H1 (cell line): ENCODE measurements at regions of chr5 and their contacts with region 1.

Region 1: GRCh38 chr5:57338068-57338892 is 144.3 kb downstream of the ACTBL2 start:
- DNase-seq: no peak
- H3K4me3 ChIP-seq: no peak overlapping the region
- H3K27ac ChIP-seq: no peak overlapping the region
- H3K4me1 ChIP-seq: no peaks in the 10 kb centered on the region
- H3K27me3 ChIP-seq: peaks cover 0 to 1% (median 0%) of the 10 kb centered on the region in 4 experiments; a peak in 1 of 7 replicates
- CTCF ChIP-seq: peak; percentile 53 to 86 (median 75)
- EP300 ChIP-seq: no peak
- POLR2A ChIP-seq: no peak
- RAD21 ChIP-seq: peak; percentile 67 to 76

Region 2: DNA sequence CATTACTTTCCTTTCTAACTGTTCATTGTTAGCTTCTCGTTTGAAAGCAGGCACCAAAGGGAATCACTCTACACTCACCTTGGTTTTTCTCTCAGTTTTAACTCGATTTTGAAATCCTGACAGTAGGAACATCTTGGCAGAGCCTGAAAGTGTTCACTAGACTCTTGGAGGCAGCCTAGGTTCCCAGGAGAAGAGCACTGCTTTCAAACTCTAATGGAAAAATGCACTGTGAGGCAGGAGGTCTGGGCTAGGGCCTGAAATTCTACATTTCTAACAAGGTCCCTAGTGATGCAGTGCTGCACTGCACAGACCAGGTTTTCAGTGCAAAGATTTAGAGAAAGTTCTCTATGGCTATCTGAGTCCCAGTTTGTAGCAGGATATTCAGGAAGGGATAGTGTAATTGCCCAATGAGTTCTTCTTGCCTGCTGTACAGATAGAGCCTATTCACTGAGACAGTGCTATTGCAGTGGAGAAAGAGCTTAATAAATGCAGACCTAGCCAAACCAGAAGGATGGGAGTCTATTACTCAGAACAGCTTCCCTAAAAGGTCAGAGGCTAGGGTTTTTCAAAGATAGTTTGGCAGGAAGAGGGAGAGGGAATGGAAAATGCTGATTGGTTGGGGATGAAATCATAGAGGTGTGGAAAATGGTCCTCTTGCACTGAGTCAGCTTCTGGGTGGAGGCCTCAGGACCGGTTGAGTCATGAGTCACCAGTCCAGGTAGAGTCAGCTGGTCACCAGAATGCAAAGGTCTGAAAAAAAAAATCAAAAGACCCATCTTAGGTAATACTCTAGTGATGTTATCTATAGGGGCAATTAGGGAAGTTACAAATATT is 10.5 kb before region 1 on chr5:
- CTCF ChIA-PET with region 1: interaction called, 69 read pairs
- POLR2A ChIA-PET with region 1: interaction called, 5 read pairs
- DNase-seq: no peak
- H3K4me3 ChIP-seq: no peak overlapping the region
- H3K27ac ChIP-seq: no peak overlapping the region
- H3K4me1 ChIP-seq: no peaks in the 10 kb centered on the region
- H3K27me3 ChIP-seq: no peaks in the 10 kb centered on the region
- CTCF ChIP-seq: no peak
- EP300 ChIP-seq: no peak
- POLR2A ChIP-seq: no peak
- RAD21 ChIP-seq: no peak

Region 3: DNA sequence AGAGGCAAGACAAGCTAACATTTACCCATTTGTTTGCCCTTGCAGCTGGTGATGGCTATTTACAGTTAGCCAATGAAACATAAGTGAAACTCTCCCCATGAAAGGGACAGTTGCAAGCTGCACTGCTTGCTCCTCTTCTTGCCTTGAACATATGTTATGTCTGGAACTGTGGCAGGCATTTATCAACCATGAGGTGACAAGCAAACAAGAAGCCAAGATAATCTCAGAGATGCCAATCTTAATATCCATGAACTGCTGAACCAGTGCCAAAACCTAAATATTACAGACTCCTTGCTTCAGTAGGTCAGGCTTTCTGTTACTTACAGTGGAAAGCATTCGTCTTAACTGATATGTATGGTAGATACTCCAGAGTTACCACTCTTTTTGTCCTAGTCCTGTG is 10.9 kb after region 1 on chr5:
- CTCF ChIA-PET with region 1: interaction called, 18 read pairs
- POLR2A ChIA-PET with region 1: no interaction called
- DNase-seq: no peak
- H3K4me3 ChIP-seq: no peak overlapping the region
- H3K27ac ChIP-seq: no peak overlapping the region
- H3K4me1 ChIP-seq: no peaks in the 10 kb centered on the region
- H3K27me3 ChIP-seq: no peaks in the 10 kb centered on the region
- CTCF ChIP-seq: no peak
- EP300 ChIP-seq: no peak
- POLR2A ChIP-seq: no peak
- RAD21 ChIP-seq: no peak

Region 4: GRCh38 chr5:57422993-57423392 is 84.7 kb after region 1 on chr5:
- CTCF ChIA-PET with region 1: interaction called, 10 read pairs
- POLR2A ChIA-PET with region 1: no interaction called
- DNase-seq: no peak
- H3K4me3 ChIP-seq: no peak overlapping the region
- H3K27ac ChIP-seq: no peak overlapping the region
- H3K4me1 ChIP-seq: no peaks in the 10 kb centered on the region
- H3K27me3 ChIP-seq: no peaks in the 10 kb centered on the region
- CTCF ChIP-seq: no peak
- EP300 ChIP-seq: no peak
- POLR2A ChIP-seq: no peak
- RAD21 ChIP-seq: no peak